Activated T-helper 1 cell treated with anti-CD3 and anti-CD28 coated beads, Interleukin-12 subunit alpha, Interleukin-12 subunit beta, Interleukin-2, Interleukin-4 antibody, amounts not matched to agents 30 ng/mL and 10 ng/mL and 1 ng/mL, durations not matched to agents 14 hours and 24 hours and 36 hours (primary cell): ENCODE measurements at regions of chr7 and their contacts with region 1.

Region 1: GRCh38 chr7:7968543-7969305 is at the start of gene GLCCI1:
- DNase-seq: peak; percentile 95
- H3K4me3 Mint-ChIP-seq: peak within 1 kb of the TSS; percentile 89
- H3K27ac Mint-ChIP-seq: peak within 1 kb of the TSS; percentile 91
- H3K4me1 Mint-ChIP-seq: peaks cover 20% of the 10 kb centered on the region
- H3K27me3 Mint-ChIP-seq: no peaks in the 10 kb centered on the region
- total RNA-seq, gene GLCCI1: 13.4 and 13.5 TPM in 2 replicates

Region 2: GRCh38 chr7:7182156-7183060 is 786.3 kb before region 1 on chr7 and contains the start of gene C1GALT1:
- intact Hi-C with region 1: loop called (anchors 1 kb)
- DNase-seq: peak; percentile 94
- H3K4me3 Mint-ChIP-seq: peak within 1 kb of the TSS; percentile 94
- H3K27ac Mint-ChIP-seq: peak within 1 kb of the TSS; percentile 99
- H3K4me1 Mint-ChIP-seq: peaks cover 6% of the 10 kb centered on the region
- H3K27me3 Mint-ChIP-seq: no peaks in the 10 kb centered on the region
- total RNA-seq, gene C1GALT1: 35.8 and 41.4 TPM in 2 replicates

Region 3: DNA sequence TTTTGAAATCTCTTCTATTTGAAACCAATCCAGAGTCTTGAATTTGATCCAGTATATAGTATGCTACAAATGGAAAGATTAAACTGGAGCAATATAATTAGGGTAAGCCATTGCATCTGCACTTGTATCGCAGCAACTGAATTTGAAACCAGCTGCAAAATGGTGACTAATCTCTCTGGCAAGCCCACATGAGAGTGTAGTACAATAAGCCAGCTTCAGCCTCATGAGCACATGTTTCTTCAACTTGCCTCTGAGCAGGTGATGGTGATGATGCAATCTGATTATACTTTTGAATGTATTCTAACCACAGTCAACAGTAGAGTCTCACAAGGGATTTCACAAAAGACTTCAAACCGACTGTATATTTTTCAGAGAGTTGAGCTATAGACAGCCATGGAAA is 249.5 kb before region 1 on chr7:
- intact Hi-C with region 1: loop called (anchors 5 kb)
- DNase-seq: peak; percentile 50
- H3K4me3 Mint-ChIP-seq: peak overlapping the region; percentile 56
- H3K27ac Mint-ChIP-seq: peak overlapping the region; percentile 80
- H3K4me1 Mint-ChIP-seq: peaks cover 27% of the 10 kb centered on the region
- H3K27me3 Mint-ChIP-seq: peaks cover 2% of the 10 kb centered on the region

Region 4: GRCh38 chr7:7851381-7851780 is 117.3 kb before region 1 on chr7:
- intact Hi-C with region 1: loop called (anchors 2 kb)
- DNase-seq: no peak
- H3K4me3 Mint-ChIP-seq: no peak overlapping the region
- H3K27ac Mint-ChIP-seq: no peak overlapping the region
- H3K4me1 Mint-ChIP-seq: peaks cover 30% of the 10 kb centered on the region
- H3K27me3 Mint-ChIP-seq: no peaks in the 10 kb centered on the region

Region 5: GRCh38 chr7:7956531-7957128 is 12.1 kb before region 1 on chr7:
- intact Hi-C with region 1: no loop called
- DNase-seq: no peak
- H3K4me3 Mint-ChIP-seq: no peak overlapping the region
- H3K27ac Mint-ChIP-seq: no peak overlapping the region
- H3K4me1 Mint-ChIP-seq: no peaks in the 10 kb centered on the region
- H3K27me3 Mint-ChIP-seq: no peaks in the 10 kb centered on the region

Region 6: GRCh38 chr7:8035647-8036518 is 67.2 kb after region 1 on chr7:
- intact Hi-C with region 1: loop called (anchors 2 kb)
- DNase-seq: no peak
- H3K4me3 Mint-ChIP-seq: no peak overlapping the region
- H3K27ac Mint-ChIP-seq: no peak overlapping the region
- H3K4me1 Mint-ChIP-seq: peaks cover 18% of the 10 kb centered on the region
- H3K27me3 Mint-ChIP-seq: no peaks in the 10 kb centered on the region

Region 7: GRCh38 chr7:8092140-8092539 is 123.4 kb after region 1 on chr7:
- intact Hi-C with region 1: no loop called
- DNase-seq: no peak
- H3K4me3 Mint-ChIP-seq: no peak overlapping the region
- H3K27ac Mint-ChIP-seq: no peak overlapping the region
- H3K4me1 Mint-ChIP-seq: no peaks in the 10 kb centered on the region
- H3K27me3 Mint-ChIP-seq: no peaks in the 10 kb centered on the region

Region 8: DNA sequence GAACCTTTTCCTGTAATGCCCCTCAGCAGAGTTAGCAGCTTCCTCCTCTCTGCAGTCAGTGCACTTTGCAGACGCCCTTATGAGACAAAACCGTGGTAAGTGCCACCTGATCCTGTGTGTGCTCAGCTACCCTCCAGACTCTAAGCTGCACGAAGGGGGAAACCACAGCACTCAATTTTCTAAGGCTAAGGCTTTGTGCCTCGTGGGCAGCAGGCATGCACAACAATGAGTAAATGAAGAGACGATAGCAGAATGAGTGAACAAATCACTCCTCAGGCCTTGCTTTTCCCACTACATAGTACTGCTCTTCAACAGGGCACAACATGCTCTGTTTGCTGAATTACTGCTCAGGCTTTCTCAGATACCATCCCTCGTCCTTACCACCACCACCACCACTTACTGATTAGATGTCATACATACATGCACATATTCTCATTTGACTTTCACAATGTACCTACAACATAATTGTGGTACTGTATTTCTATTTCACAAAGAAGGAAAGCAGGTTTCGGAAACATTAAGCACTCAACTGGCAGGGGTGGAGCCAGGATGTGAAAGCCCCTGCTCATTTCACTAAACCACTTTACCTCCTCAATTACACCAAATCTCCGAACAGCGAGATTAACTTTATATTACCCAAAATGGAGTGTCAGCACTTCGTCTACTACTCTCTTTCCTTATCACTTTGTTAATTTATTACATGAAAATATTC is 207.8 kb after region 1 on chr7:
- intact Hi-C with region 1: loop called (anchors 1 kb)
- DNase-seq: peak; percentile 60
- H3K4me3 Mint-ChIP-seq: peak overlapping the region; percentile 76
- H3K27ac Mint-ChIP-seq: peak overlapping the region; percentile 99
- H3K4me1 Mint-ChIP-seq: peaks cover 53% of the 10 kb centered on the region
- H3K27me3 Mint-ChIP-seq: peaks cover 2% of the 10 kb centered on the region